Activated CD4-positive, alpha-beta T cell treated with anti-CD3 and anti-CD28 coated beads, Interleukin-2, amount 10 ng/mL, durations not matched to agents 24 days and 14 days (primary cell): ENCODE measurements at regions of chr5 and their contacts with region 1.

Region 1: DNA sequence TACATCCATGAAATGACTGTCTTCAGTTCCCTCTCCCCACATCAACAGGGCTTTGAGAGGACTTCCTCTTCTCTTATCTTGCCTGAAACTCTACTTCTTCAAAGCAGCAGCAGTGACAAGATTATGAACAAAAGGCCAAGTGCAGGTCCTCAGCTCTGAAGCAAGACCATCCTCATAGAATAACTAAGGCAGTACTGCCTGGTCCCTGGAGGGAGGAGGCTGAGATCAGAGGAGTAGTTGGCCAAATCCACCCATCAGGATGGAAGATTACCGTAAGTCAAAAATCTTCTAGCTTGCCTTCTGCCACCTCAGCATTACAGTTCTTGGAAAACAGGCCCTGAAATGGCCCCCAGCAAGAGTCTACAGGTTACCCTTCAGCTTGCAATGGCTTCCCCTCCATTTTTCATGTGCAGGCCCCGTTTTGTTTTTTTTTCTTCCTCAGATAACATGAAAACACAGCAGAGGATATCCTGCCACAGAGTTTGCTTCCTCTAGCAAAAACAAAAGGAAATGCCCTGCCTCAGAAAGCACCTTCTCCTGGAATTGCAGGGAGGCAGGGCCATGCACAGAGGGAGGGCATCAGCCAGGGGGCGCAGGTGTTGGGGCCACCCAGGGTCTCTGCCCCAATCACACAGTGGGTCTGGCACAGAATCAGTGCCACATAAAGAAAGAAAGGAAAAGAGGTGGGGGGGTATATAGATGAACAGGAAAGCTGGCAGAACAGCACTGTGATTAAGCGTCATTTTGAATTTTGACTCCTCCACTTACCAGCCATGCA is 40.0 kb downstream of the KLHL3 start:
- DNase-seq: peak; percentile 77
- H3K4me3 Mint-ChIP-seq: peak overlapping the region; percentile 75
- H3K27ac Mint-ChIP-seq: peak overlapping the region; percentile 88
- H3K4me1 Mint-ChIP-seq: peaks cover 38% of the 10 kb centered on the region
- H3K27me3 Mint-ChIP-seq: no peaks in the 10 kb centered on the region

Region 2: GRCh38 chr5:137660349-137660817 is 35.5 kb before region 1 on chr5:
- intact Hi-C with region 1: loop called (anchors 2 kb)
- DNase-seq: peak; percentile 91
- H3K4me3 Mint-ChIP-seq: no peak overlapping the region
- H3K27ac Mint-ChIP-seq: no peak overlapping the region
- H3K4me1 Mint-ChIP-seq: peaks cover 3% of the 10 kb centered on the region
- H3K27me3 Mint-ChIP-seq: no peaks in the 10 kb centered on the region

Region 3: GRCh38 chr5:137735555-137736284 is 39.9 kb after region 1 on chr5 and contains the start of gene KLHL3:
- intact Hi-C with region 1: loop called (anchors 1 kb)
- DNase-seq: peak; percentile 78
- H3K4me3 Mint-ChIP-seq: no peak within 1 kb of the TSS
- H3K27ac Mint-ChIP-seq: no peak within 1 kb of the TSS
- H3K4me1 Mint-ChIP-seq: peaks cover 6% of the 10 kb centered on the region
- H3K27me3 Mint-ChIP-seq: peaks cover 3% of the 10 kb centered on the region
- total RNA-seq, gene KLHL3: 1.5 and 2.2 TPM in 2 replicates

Region 4: DNA sequence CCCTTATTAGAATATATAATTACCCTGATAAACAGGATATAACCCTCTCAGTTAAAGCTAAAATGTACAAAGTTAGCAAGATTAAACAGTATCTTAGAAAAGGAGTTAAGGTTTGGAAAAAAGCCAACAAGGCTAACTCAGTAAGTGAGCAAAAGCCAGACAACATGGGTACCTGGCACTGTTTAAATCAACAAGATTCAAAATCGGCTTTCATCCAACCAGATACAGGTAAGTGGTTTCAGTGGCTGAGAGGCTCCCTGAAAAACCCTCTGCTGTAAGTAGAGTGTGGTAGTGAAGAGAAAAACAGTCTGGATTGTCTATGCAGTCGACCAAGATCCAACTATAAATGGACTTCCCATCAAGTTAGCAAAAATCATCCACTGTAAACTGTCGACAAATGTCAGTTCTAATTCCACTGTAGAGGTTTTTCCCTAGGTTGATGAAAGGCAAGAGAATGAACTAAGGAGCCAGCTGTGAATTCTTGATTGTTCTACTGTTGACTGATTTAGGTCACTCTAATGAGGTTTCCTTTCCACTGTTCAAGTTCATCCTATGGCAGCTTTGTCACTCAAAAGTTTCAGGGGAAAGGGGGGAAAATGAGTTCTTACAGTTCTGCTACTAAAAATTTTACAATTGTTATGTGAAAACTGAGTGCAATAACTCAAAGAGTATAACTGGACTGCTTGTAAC is 819.9 kb after region 1 on chr5:
- intact Hi-C with region 1: no loop called
- DNase-seq: no peak
- H3K4me3 Mint-ChIP-seq: no peak overlapping the region
- H3K27ac Mint-ChIP-seq: no peak overlapping the region
- H3K4me1 Mint-ChIP-seq: peaks cover 11% of the 10 kb centered on the region
- H3K27me3 Mint-ChIP-seq: no peaks in the 10 kb centered on the region